K562 (cell line): ENCODE measurements at regions of chr11 and their contacts with region 1.

Region 1: GRCh38 chr11:96105197-96105895 is 181.4 kb upstream of the MTMR2 start:
- DNase-seq: no peak
- ATAC-seq: no peak
- H3K4me3 ChIP-seq: no peak overlapping the region
- H3K27ac ChIP-seq: no peak overlapping the region
- H3K4me1 ChIP-seq: peaks cover 9 to 39% of the 10 kb centered on the region in 2 experiments; a peak in 4 of 5 replicates
- H3K27me3 ChIP-seq: no peaks in the 10 kb centered on the region
- CTCF ChIP-seq: no peak
- EP300 ChIP-seq: no peak
- POLR2A ChIP-seq: no peak
- RAD21 ChIP-seq: no peak

Region 2: GRCh38 chr11:95891423-95892177 is 213.7 kb before region 1 on chr11:
- CTCF ChIA-PET with region 1: no interaction called
- POLR2A ChIA-PET with region 1: no interaction called
- in situ Hi-C with region 1: no loop called
- intact Hi-C with region 1: no loop called
- DNase-seq: no peak
- ATAC-seq: peak; percentile 50
- H3K4me3 ChIP-seq: no peak overlapping the region
- H3K27ac ChIP-seq: no peak overlapping the region
- H3K4me1 ChIP-seq: peaks cover 0 to 8% of the 10 kb centered on the region in 2 experiments; a peak in 1 of 5 replicates
- H3K27me3 ChIP-seq: no peaks in the 10 kb centered on the region
- CTCF ChIP-seq: no peak
- EP300 ChIP-seq: no peak
- POLR2A ChIP-seq: no peak
- RAD21 ChIP-seq: no peak

Region 3: GRCh38 chr11:96155627-96156378 is 50.5 kb after region 1 on chr11:
- CTCF ChIA-PET with region 1: no interaction called
- POLR2A ChIA-PET with region 1: no interaction called
- in situ Hi-C with region 1: no loop called
- intact Hi-C with region 1: loop called (anchors 5 kb)
- DNase-seq: peak; percentile 66 to 87 (median 76)
- ATAC-seq: peak; percentile 86
- H3K4me3 ChIP-seq: no peak overlapping the region
- H3K27ac ChIP-seq: peak overlapping the region; percentile 87
- H3K4me1 ChIP-seq: peaks cover 12 to 36% of the 10 kb centered on the region in 2 experiments; a peak in 4 of 5 replicates
- H3K27me3 ChIP-seq: no peaks in the 10 kb centered on the region
- CTCF ChIP-seq: peak; percentile 51 to 64 (median 53)
- EP300 ChIP-seq: 0 out of 2 replicates have a peak, but pooled peaks have one; percentile 4
- POLR2A ChIP-seq: no peak; the same call in 1 of the 2 replicates
- RAD21 ChIP-seq: peak; percentile 59 to 70